Right lobe of liver (tissue), 6 donors: ENCODE measurements at regions of chr14 and their contacts with region 1.

Region 1: DNA sequence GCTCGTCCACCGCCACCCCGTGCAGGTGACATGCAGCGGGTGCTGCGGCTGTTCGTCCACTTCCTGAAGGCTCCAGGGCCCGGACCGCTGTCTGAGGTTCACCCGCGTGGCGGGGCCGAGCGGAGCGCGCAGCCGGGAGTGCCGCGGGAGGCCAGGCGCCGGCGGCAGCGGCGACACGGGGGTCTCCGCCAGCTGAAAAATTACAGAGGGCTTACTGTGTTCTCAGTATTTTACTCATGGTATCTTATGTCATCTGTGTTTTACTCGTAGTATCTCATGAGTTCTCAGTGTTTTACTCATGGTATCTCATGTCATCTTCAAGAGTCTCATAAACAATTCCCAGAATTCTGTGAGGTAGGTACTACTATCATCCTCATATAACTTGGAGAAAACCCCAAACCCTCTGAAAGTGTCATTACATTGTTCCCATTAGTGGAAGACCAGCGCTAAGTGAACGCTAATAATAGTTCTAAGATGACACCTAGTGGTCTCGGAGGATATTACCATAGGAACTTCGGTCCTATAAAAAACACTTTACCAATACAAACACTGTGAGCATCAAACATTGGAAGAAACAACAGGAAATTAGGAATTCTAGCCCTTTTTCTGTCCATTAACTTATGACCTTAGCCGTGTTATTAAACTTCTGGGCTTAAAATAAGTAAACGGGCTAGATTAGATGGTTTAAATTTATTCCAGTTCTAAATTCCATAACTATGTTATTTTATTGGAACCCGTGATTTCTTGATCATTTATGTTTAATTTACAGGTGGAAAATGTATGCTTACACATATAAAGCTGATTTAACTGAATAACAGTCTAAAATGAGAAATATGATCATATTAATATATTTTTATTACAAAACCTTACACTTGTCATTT is 32.4 kb downstream of the AK7 start:
- DNase-seq: peak; percentile 50 to 58 (median 50)
- ATAC-seq: peak; percentile 97 to 99 (median 98)
- H3K4me3 ChIP-seq: peak overlapping the region; percentile 42 to 51 (median 46)
- H3K27ac ChIP-seq: no peak overlapping the region
- H3K4me1 ChIP-seq: no peaks in the 10 kb centered on the region
- H3K27me3 ChIP-seq: no peaks in the 10 kb centered on the region
- CTCF ChIP-seq: peak; percentile 71 to 92 (median 74)
- POLR2A ChIP-seq: no peak

Region 2: GRCh38 chr14:96297000-96297399 is 127.3 kb before region 1 on chr14:
- intact Hi-C with region 1: loop called (anchors 5 to 10 kb)
- DNase-seq: no peak
- ATAC-seq: peak; percentile 52 to 70 (median 60)
- H3K4me3 ChIP-seq: no peak overlapping the region
- H3K27ac ChIP-seq: no peak overlapping the region
- H3K4me1 ChIP-seq: no peaks in the 10 kb centered on the region
- H3K27me3 ChIP-seq: no peaks in the 10 kb centered on the region
- CTCF ChIP-seq: peak; percentile 45 to 60 (median 59)
- POLR2A ChIP-seq: no peak

Region 3: GRCh38 chr14:96304956-96305355 is 119.4 kb before region 1 on chr14:
- intact Hi-C with region 1: loop called in 1 of 2 experiments (anchors 5 kb)
- DNase-seq: no peak
- ATAC-seq: no peak
- H3K4me3 ChIP-seq: no peak overlapping the region
- H3K27ac ChIP-seq: no peak overlapping the region
- H3K4me1 ChIP-seq: peaks cover 0 to 17% (median 6%) of the 10 kb centered on the region in 4 donors
- H3K27me3 ChIP-seq: no peaks in the 10 kb centered on the region
- CTCF ChIP-seq: no peak
- POLR2A ChIP-seq: no peak

Region 4: GRCh38 chr14:96320605-96321004 is 103.7 kb before region 1 on chr14:
- intact Hi-C with region 1: no loop called
- DNase-seq: no peak
- ATAC-seq: no peak
- H3K4me3 ChIP-seq: no peak overlapping the region
- H3K27ac ChIP-seq: no peak overlapping the region
- H3K4me1 ChIP-seq: no peaks in the 10 kb centered on the region
- H3K27me3 ChIP-seq: no peaks in the 10 kb centered on the region
- CTCF ChIP-seq: no peak
- POLR2A ChIP-seq: no peak